Caco-2 (cell line): ENCODE measurements at regions of chr17 and their contacts with region 1.

Region 1: DNA sequence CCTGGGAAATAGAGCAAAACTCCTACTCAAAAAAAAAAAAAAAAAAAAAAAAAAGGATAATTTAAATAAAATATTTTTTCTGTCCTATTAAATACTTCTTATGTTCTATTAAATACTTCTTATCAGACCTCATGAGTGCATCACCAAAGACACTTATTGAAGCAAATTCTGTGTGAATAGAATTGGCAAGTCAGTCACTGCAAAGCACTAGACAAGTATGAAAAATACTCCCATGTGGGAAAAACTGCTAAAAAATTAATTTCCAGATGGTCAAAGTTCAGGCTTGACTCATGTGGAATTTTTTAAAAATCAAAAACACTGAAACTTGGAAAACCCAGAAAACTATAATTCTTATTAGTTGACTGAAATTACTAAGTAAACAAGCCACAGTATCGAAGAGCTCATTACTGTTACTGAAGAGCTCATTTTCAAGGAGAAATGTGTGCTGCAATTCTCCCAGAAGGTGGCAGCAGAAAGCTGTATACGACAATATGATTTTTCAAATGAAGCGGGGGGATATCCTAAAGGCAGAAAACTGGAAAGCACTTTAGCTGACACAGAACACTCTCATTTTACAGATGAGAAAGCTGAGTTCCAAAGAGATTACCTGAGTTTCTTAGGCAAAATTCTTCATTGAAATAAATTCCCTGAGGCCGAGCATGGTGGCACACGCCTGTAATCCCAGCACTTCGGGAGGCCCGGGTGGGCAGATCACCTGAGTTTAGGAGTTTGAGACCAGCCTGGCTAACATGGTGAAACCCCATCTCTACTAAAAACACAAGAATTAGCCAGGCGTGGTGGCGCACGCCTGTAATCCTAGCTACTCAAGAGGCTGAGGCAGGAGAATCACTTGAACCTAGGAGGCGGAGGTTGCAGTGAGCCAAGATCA is 15.9 kb upstream of the FBXO47 start:
- DNase-seq: peak; percentile 61 to 63
- H3K4me3 ChIP-seq: no peak overlapping the region
- H3K4me3 Mint-ChIP-seq: no peak overlapping the region
- H3K27ac Mint-ChIP-seq: no peak overlapping the region
- H3K4me1 ChIP-seq: no peaks in the 10 kb centered on the region
- H3K4me1 Mint-ChIP-seq: no peaks in the 10 kb centered on the region
- H3K27me3 ChIP-seq: no peaks in the 10 kb centered on the region
- H3K27me3 Mint-ChIP-seq: peaks cover 2% of the 10 kb centered on the region
- CTCF ChIP-seq: peak; percentile 66 to 73

Region 2: GRCh38 chr17:38868817-38869525 is 114.1 kb before region 1 on chr17:
- CTCF ChIA-PET with region 1: interaction called, 20 read pairs
- POLR2A ChIA-PET with region 1: no interaction called
- intact Hi-C with region 1: no loop called
- DNase-seq: peak; percentile 92 to 95
- H3K4me3 ChIP-seq: peak overlapping the region; percentile 79
- H3K4me3 Mint-ChIP-seq: peak overlapping the region; percentile 86
- H3K27ac Mint-ChIP-seq: peak overlapping the region; percentile 92
- H3K4me1 ChIP-seq: peaks cover 28% of the 10 kb centered on the region
- H3K4me1 Mint-ChIP-seq: peaks cover 11% of the 10 kb centered on the region
- H3K27me3 ChIP-seq: no peaks in the 10 kb centered on the region
- H3K27me3 Mint-ChIP-seq: no peaks in the 10 kb centered on the region
- CTCF ChIP-seq: peak in 1 of 2 experiments; percentile 20

Region 3: GRCh38 chr17:39077866-39078265 is 94.8 kb after region 1 on chr17:
- CTCF ChIA-PET with region 1: interaction called, 8 read pairs
- POLR2A ChIA-PET with region 1: no interaction called
- intact Hi-C with region 1: loop called (anchors 10 kb)
- DNase-seq: no peak
- H3K4me3 ChIP-seq: no peak overlapping the region
- H3K4me3 Mint-ChIP-seq: no peak overlapping the region
- H3K27ac Mint-ChIP-seq: no peak overlapping the region
- H3K4me1 ChIP-seq: no peaks in the 10 kb centered on the region
- H3K4me1 Mint-ChIP-seq: no peaks in the 10 kb centered on the region
- H3K27me3 ChIP-seq: no peaks in the 10 kb centered on the region
- H3K27me3 Mint-ChIP-seq: peaks cover 2% of the 10 kb centered on the region
- CTCF ChIP-seq: peak; percentile 14 to 16

Region 4: DNA sequence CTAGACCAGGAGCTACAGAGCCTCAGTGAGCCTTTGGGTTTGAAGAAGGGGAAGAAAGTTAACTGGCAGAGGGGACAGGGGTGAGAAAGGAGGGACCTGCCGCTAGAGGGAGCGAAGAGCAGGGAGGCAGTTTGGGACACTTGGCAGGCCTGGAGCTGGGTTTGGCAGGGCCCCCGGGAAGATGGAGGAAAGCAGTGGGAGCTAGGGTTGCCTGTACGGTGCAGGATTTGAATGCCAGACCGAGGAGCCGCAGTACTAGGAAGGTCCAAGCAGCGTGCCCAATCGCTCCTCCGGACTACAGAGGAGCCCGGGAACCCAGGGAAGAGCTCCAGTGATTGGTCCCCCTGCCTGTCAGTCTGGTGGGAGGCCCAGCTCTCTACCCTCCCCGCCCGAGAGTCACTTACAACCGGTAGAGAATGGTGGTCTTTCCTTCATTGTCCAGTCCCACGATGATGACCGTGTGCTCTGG is 181.6 kb after region 1 on chr17:
- CTCF ChIA-PET with region 1: interaction called, 11 read pairs
- POLR2A ChIA-PET with region 1: no interaction called
- intact Hi-C with region 1: no loop called
- DNase-seq: peak; percentile 79 to 80
- H3K4me3 ChIP-seq: no peak overlapping the region
- H3K4me3 Mint-ChIP-seq: no peak overlapping the region
- H3K27ac Mint-ChIP-seq: no peak overlapping the region
- H3K4me1 ChIP-seq: peaks cover 21% of the 10 kb centered on the region
- H3K4me1 Mint-ChIP-seq: peaks cover 23% of the 10 kb centered on the region
- H3K27me3 ChIP-seq: no peaks in the 10 kb centered on the region
- H3K27me3 Mint-ChIP-seq: no peaks in the 10 kb centered on the region
- CTCF ChIP-seq: peak; percentile 76 to 86

Region 5: GRCh38 chr17:39199820-39200069 is 216.6 kb after region 1 on chr17:
- CTCF ChIA-PET with region 1: interaction called, 11 read pairs
- POLR2A ChIA-PET with region 1: interaction called, 3 read pairs
- intact Hi-C with region 1: no loop called
- DNase-seq: peak; percentile 87 to 94
- H3K4me3 ChIP-seq: peak overlapping the region; percentile 87
- H3K4me3 Mint-ChIP-seq: peak overlapping the region; percentile 87
- H3K27ac Mint-ChIP-seq: peak overlapping the region; percentile 99
- H3K4me1 ChIP-seq: peaks cover 15% of the 10 kb centered on the region
- H3K4me1 Mint-ChIP-seq: peaks cover 6% of the 10 kb centered on the region
- H3K27me3 ChIP-seq: no peaks in the 10 kb centered on the region
- H3K27me3 Mint-ChIP-seq: no peaks in the 10 kb centered on the region
- CTCF ChIP-seq: no peak